ENCODE measurements at regions of chr2 and their contacts with region 1.

Region 1: DNA sequence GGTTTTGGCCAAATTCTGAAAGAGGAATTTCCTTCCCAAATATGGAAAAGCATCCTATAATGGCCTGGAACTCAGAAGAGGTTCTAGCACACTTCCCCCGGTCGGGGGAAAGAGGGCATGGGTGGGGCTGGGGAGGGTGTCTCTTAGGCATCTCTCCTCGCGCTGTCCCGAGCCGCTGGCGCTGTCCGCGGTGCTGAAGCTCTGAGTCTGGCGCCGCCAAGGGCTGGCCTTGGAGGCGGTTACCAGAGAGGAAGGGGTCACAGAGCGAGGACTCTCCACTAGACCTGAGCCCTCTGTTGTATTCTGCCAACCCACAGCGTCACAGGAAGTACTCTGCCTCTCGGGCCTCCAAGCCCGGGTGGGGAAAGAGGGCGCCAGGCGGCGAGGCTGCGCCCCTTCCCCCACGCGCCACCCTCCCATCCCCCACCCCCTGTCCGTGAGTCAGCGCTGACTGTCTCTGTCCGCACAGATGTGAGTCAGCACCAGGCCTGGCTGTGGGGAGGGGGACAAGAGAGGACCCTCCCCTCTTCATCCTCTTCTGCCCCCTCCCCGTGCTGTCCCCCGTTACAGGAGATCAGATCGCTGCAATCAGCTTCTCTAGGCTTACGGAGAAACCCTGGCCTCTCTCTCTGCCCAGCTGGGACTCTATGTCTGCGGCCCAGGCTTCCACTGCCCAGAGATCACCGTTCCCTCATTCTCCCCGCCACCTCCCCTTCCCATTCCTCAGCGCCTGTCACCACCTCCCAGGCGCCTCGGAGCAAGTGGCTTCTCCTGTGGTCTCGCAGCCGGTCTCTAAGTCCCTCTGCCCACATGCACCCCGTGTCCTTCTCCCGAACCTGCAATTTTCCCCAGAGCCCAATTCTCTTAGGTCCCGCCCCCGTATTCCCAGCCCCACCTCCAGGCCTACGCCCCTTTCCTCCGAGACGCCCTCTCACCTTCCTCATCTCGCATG is 783 bp downstream of the PTPRN start:
- DNase-seq: peak; percentile 53
- H3K4me3 ChIP-seq: no peak overlapping the region
- H3K27ac ChIP-seq: no peak overlapping the region
- H3K4me1 ChIP-seq: peaks cover 0 to 6% (median 0%) of the 10 kb centered on the region in 4 donors
- H3K27me3 ChIP-seq: peaks cover 71% of the 10 kb centered on the region
- CTCF ChIP-seq: no peak
- EP300 ChIP-seq: no peak
- POLR2A ChIP-seq: no peak

Region 2: GRCh38 chr2:219155054-219155644 is 153.3 kb before region 1 on chr2:
- in situ Hi-C with region 1: loop called in 1 of 4 experiments (anchors 10 kb)
- intact Hi-C with region 1: no loop called
- DNase-seq: peak; percentile 25
- H3K4me3 ChIP-seq: no peak overlapping the region
- H3K27ac ChIP-seq: no peak overlapping the region
- H3K4me1 ChIP-seq: peaks cover 4 to 6% (median 4%) of the 10 kb centered on the region in 4 donors
- H3K27me3 ChIP-seq: no peaks in the 10 kb centered on the region
- CTCF ChIP-seq: peak; percentile 56 to 88 (median 64)
- EP300 ChIP-seq: no peak
- POLR2A ChIP-seq: no peak